ENCODE measurements at regions of chr1 and their contacts with region 1.

Region 1: GRCh38 chr1:109365642-109366221 is 32.0 kb downstream of the SORT1 start:
- DNase-seq: no peak
- H3K4me3 ChIP-seq: no peak overlapping the region
- CTCF ChIP-seq: no peak
- POLR2A ChIP-seq: no peak

Region 2: DNA sequence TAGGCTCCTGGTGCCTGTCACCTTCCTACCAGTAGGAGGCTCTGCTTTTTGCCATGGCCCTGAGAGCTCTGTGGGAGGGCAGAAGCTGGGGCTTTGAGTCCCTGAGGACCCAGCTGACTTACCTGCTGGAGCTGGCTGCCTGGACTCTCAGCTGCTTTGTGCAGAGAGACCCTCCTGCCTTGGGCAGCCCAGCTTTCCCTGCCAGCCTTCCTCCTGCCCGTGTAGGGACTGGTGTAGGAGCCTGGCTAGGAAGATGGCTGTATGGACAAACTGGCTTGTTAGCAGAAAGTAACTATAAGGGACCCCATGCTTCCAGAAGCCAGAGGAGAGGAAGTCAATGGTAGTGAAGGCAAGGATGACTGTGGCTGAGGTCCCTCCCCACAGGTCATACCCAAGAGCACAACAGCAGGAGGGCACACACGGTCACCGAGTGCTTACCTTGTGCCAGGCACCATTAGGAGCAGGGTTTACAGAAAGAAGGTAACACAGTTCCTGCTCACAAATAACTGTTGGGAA is 126.1 kb before region 1 on chr1:
- intact Hi-C with region 1: no loop called
- DNase-seq: no peak
- H3K4me3 ChIP-seq: no peak overlapping the region
- CTCF ChIP-seq: no peak
- POLR2A ChIP-seq: no peak

Region 3: DNA sequence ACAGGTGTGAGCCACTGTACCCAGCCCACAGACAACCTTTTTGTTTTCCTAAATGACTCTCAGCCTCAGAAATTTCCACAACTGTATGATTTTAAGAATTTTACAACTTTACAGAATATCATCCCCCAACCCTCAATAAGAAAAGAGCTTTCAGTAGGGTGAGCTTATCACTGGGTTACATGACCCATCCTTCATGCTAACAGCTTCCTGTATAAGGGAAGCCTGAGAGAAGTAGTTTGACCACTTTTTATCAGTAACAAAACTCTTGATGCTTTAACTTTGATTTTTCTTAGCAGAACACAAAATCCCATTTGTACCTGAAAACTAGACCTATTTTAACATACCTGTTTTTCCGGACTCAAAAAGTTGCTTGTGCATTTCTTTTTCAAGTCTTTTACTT is 49.2 kb before region 1 on chr1:
- intact Hi-C with region 1: loop called (anchors 1 kb)
- DNase-seq: no peak
- H3K4me3 ChIP-seq: no peak overlapping the region
- CTCF ChIP-seq: no peak
- POLR2A ChIP-seq: no peak